Gastrocnemius medialis (tissue), 4 donors: ENCODE measurements at regions of chr9 and their contacts with region 1.

Region 1: GRCh38 chr9:89483592-89484522 is 14.1 kb downstream of the SEMA4D start:
- DNase-seq: peak in 1 of 2 donors; percentile 43
- ATAC-seq: peak; percentile 8 to 11
- H3K4me3 ChIP-seq: peak overlapping the region; percentile 5 to 38 (median 33)
- H3K27ac ChIP-seq: peak overlapping the region; percentile 89 to 95 (median 92)
- H3K4me1 ChIP-seq: peaks cover 65 to 71% of the 10 kb centered on the region in 2 donors
- H3K27me3 ChIP-seq: no peaks in the 10 kb centered on the region
- CTCF ChIP-seq: no peak
- POLR2A ChIP-seq: no peak

Region 2: DNA sequence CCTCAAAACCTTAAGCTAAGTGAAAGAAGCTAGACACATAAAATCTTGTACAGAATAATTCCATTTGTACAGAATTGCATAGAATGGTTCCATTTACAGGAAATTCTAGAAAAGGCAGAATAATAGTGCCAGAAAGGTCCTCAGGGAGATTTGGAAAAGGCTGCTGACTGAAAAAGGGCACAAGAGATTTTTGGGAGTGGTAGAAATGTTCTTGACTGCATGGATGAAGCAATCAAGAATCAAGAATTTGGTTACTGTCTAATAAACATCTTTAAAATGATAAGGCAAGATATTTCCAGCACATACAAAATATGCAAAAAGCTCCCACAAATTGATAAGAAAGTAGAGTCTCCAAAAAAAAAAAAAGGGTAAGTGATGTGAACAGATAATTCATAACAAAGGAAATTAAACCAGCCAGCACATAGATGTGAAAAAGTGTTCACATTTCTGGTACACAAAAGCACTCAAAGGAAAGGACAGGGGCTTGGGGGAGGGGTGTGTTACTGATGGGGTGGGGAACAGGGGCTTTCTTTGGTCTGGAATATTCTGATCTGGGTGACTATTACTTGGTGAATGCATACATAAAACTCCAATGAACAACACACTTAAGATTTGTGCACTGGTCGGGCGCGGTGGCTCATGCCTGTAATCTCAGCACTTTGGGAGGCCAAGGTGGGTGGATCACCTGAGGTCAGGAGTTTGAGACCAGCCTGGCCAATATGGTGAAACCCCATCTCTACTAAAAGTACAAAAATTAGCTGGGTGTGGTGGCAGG is 390.5 kb before region 1 on chr9:
- in situ Hi-C with region 1: no loop called
- intact Hi-C with region 1: no loop called
- DNase-seq: no peak
- ATAC-seq: no peak
- H3K4me3 ChIP-seq: no peak overlapping the region
- H3K27ac ChIP-seq: no peak overlapping the region
- H3K4me1 ChIP-seq: peaks cover 0 to 4% of the 10 kb centered on the region in 2 donors
- H3K27me3 ChIP-seq: no peaks in the 10 kb centered on the region
- CTCF ChIP-seq: no peak
- POLR2A ChIP-seq: no peak

Region 3: GRCh38 chr9:89395931-89396710 is 87.7 kb before region 1 on chr9:
- in situ Hi-C with region 1: no loop called
- intact Hi-C with region 1: no loop called
- DNase-seq: no peak
- ATAC-seq: no peak
- H3K4me3 ChIP-seq: no peak overlapping the region
- H3K27ac ChIP-seq: no peak overlapping the region
- H3K4me1 ChIP-seq: peaks cover 0 to 4% of the 10 kb centered on the region in 2 donors
- H3K27me3 ChIP-seq: no peaks in the 10 kb centered on the region
- CTCF ChIP-seq: no peak
- POLR2A ChIP-seq: no peak

Region 4: GRCh38 chr9:89440548-89441370 is 43.1 kb before region 1 on chr9:
- in situ Hi-C with region 1: no loop called
- intact Hi-C with region 1: loop called (anchors 2 kb)
- DNase-seq: peak; percentile 93 to 98
- ATAC-seq: peak; percentile 94 to 95
- H3K4me3 ChIP-seq: no peak overlapping the region
- H3K27ac ChIP-seq: peak overlapping the region; percentile 83 to 88 (median 85)
- H3K4me1 ChIP-seq: peaks cover 42 to 55% of the 10 kb centered on the region in 2 donors
- H3K27me3 ChIP-seq: no peaks in the 10 kb centered on the region
- CTCF ChIP-seq: no peak
- POLR2A ChIP-seq: peak; percentile 58 to 71

Region 5: DNA sequence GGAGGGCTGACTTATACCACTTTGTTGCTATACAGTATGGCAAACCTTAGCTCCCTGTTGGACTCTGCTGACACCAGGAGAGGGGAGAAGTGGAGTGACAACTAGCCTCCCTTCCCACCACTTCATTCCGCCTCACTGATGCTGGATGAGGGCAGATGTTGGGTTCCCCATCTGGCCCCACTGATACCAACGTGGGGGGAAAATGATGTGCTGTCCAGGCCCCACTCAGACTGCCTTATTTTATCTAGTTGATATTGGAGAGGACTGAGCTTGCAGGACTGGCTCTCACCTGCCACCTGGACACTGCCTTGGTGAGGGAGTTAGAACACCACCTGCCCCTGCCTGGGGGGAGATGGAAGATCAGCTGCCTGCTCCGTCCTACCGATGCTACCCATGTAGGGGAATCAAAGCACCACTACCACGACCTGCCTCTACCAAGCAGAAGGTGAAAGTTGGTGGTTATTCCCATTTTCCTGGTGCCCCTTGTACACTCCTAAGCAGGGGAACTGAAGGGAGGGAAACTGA is 413.0 kb after region 1 on chr9:
- in situ Hi-C with region 1: no loop called
- intact Hi-C with region 1: no loop called
- DNase-seq: no peak
- ATAC-seq: no peak
- H3K4me3 ChIP-seq: no peak overlapping the region
- H3K27ac ChIP-seq: no peak overlapping the region
- H3K4me1 ChIP-seq: peaks cover 7 to 8% of the 10 kb centered on the region in 2 donors
- H3K27me3 ChIP-seq: no peaks in the 10 kb centered on the region
- CTCF ChIP-seq: no peak
- POLR2A ChIP-seq: no peak